Activated CD8-positive, alpha-beta T cell treated with anti-CD3 and anti-CD28 coated beads, Interleukin-2, amount 10 ng/mL, durations not matched to agents 7 days and 5 days (primary cell): ENCODE measurements at regions of chr5 and their contacts with region 1.

Region 1: DNA sequence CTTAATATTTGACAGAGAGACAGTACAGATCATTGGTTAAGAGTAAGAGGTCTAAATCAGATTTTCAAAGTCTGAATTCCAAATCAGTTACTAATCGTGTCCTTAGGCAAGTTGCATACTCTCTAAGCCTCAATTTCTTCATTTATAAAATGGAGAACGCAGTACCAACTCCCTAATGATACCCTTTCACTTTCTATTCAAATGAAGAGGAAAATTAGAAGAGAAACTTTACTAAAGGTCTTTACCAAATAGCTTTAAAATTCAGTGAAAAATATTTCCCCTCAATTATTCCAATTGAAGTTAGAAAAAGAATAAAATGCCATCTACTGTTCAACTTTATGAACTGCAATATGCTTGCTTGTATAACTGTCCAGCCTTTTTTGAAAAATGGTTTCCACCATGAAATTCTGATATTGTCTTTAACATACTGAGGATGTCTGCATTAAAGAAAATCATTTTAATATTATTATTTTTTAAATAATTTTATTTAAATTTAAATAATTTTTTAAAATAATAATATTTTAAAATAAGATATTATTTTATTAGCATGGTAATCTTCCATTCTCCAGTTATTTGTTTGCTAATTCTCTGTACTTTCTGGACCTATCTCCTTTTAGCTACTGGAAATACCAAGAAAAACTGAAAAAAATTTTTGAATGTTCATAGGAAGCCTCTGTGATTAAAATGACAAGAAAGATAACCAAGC is 36.0 kb downstream of the POC5 start:
- DNase-seq: no peak
- ATAC-seq: no peak
- H3K4me3 Mint-ChIP-seq: no peak overlapping the region
- H3K27ac Mint-ChIP-seq: no peak overlapping the region
- H3K4me1 Mint-ChIP-seq: peaks cover 9% of the 10 kb centered on the region
- H3K27me3 Mint-ChIP-seq: no peaks in the 10 kb centered on the region

Region 2: DNA sequence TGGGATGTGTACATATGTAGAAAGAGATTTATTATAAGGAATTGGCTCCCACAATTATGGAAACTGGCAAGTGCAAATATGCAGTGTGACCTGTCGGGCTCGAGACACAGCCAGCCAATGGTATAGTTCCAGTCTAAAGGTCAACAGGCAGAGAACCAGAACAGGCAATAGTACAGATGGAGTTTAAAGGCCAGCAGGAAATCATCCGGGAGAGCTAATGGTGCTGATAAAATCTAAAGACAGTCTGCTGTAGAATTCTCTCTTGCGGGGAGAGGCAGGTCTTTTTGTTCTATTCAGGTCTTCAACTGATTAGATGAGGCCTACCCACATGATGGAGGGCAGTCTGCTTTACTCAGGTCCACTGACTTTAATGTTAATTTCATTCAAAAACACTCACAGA is 466.4 kb before region 1 on chr5:
- CTCF ChIA-PET with region 1: no interaction called
- POLR2A ChIA-PET with region 1: no interaction called
- DNase-seq: no peak
- ATAC-seq: no peak
- H3K4me3 Mint-ChIP-seq: no peak overlapping the region
- H3K27ac Mint-ChIP-seq: no peak overlapping the region
- H3K4me1 Mint-ChIP-seq: no peaks in the 10 kb centered on the region
- H3K27me3 Mint-ChIP-seq: no peaks in the 10 kb centered on the region

Region 3: GRCh38 chr5:75668977-75669689 is 12.1 kb before region 1 on chr5:
- CTCF ChIA-PET with region 1: interaction called, 20 read pairs
- POLR2A ChIA-PET with region 1: interaction called, 5 read pairs
- DNase-seq: peak; percentile 67
- ATAC-seq: peak; percentile 95
- H3K4me3 Mint-ChIP-seq: peak overlapping the region; percentile 70
- H3K27ac Mint-ChIP-seq: peak overlapping the region; percentile 87
- H3K4me1 Mint-ChIP-seq: peaks cover 21% of the 10 kb centered on the region
- H3K27me3 Mint-ChIP-seq: no peaks in the 10 kb centered on the region

Region 4: GRCh38 chr5:75869889-75870288 is 188.6 kb after region 1 on chr5:
- CTCF ChIA-PET with region 1: no interaction called
- POLR2A ChIA-PET with region 1: no interaction called
- DNase-seq: no peak
- ATAC-seq: no peak
- H3K4me3 Mint-ChIP-seq: no peak overlapping the region
- H3K27ac Mint-ChIP-seq: no peak overlapping the region
- H3K4me1 Mint-ChIP-seq: no peaks in the 10 kb centered on the region
- H3K27me3 Mint-ChIP-seq: peaks cover 2% of the 10 kb centered on the region